Activated CD4-positive, alpha-beta memory T cell treated with anti-CD3 and anti-CD28 coated beads, Interleukin-2, amount 10 ng/mL, durations not matched to agents 7 days and 5 days (primary cell): ENCODE measurements at regions of chr17 and their contacts with region 1.

Region 1: DNA sequence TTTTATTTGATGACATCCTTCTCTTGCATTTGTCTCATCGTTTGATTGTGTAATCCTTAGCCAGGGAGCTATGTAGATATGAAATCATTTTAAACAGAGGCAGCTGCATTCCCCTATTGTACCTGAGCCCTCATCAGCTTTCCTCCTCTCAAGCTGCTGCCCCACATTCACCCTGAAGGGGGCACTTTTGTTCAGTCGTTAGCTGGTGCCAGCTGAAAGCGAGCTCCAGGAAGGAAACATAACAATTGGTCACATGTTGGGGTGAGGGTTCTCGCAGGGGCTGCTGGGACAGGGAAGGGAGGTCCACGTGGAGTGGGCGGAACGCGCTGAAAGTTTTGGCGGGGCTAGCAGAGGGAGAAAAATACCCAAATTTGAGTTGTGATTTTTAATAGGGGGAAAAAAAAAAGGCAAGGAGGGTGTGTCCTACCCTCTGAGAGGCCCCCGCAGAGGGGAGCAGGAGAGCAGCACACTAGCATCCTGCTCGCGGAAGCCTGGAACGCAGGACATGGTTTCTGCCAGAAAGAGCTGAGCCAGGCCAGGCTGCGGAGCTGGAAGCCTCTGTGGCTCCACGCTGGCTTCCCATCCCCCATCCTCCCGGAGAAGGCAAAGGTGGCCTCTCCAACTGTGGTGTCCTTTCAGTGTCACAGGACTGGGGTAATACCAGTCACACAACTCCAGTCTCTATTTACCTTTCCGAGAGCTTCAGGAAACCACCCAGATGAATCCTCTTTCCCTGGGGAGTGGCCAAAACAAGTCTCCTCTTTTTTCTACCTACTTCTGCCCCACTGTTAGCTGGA is 8.5 kb upstream of the MSL1 start:
- DNase-seq: peak; percentile 95
- H3K4me3 Mint-ChIP-seq: peak overlapping the region; percentile 76
- H3K27ac Mint-ChIP-seq: peak overlapping the region; percentile 68
- H3K4me1 Mint-ChIP-seq: peaks cover 57% of the 10 kb centered on the region
- H3K27me3 Mint-ChIP-seq: no peaks in the 10 kb centered on the region

Region 2: GRCh38 chr17:40018211-40019121 is 94.8 kb before region 1 on chr17:
- CTCF ChIA-PET with region 1: interaction called, 26 read pairs
- POLR2A ChIA-PET with region 1: interaction called, 4 read pairs
- DNase-seq: no peak
- H3K4me3 Mint-ChIP-seq: no peak overlapping the region
- H3K27ac Mint-ChIP-seq: no peak overlapping the region
- H3K4me1 Mint-ChIP-seq: peaks cover 4% of the 10 kb centered on the region
- H3K27me3 Mint-ChIP-seq: no peaks in the 10 kb centered on the region

Region 3: DNA sequence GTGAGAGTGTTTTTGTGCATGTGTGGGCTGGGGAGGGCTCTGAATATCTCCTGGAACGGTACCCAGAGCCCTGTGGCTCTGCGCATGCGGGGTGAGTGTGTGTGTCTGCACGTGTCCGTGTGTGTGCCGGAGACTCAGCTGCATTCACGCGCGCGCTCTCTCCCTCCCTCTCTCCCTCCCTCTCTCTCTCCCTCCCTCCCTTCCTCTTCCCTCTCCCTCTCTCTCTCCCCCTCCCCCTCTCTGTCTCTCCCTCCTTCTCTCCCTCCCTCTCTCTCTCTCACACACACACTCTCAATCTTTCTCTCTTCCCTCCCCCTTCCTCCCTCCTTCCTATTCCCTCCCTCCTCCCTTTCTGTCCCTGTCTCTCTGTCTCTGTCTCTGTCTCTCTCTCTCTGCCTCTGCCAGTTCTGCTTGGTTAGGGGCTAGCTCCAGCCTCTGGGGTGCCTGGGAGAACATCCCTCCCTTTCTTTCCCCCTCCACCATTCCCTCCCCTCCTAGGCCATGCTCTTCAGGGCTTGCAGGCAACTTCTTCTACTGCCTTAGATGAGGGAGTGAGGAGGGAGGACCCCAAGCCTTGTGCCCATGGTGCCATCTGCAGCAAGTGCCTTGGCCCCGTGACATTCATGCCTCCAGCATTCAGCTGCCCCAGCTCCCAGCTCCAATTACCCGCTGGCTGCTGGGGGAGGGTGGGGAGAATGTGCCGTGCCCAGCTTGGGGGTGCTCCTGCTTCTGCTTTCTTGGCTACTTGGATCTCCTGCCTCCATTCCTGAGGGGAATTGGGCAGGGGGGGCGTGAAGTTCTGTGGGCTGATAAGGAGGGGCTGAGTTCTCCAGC is 44.2 kb before region 1 on chr17:
- CTCF ChIA-PET with region 1: interaction called, 49 read pairs
- POLR2A ChIA-PET with region 1: interaction called, 11 read pairs
- DNase-seq: peak; percentile 76
- H3K4me3 Mint-ChIP-seq: peak overlapping the region; percentile 75
- H3K27ac Mint-ChIP-seq: peak overlapping the region; percentile 66
- H3K4me1 Mint-ChIP-seq: peaks cover 39% of the 10 kb centered on the region
- H3K27me3 Mint-ChIP-seq: peaks cover 11% of the 10 kb centered on the region

Region 4: DNA sequence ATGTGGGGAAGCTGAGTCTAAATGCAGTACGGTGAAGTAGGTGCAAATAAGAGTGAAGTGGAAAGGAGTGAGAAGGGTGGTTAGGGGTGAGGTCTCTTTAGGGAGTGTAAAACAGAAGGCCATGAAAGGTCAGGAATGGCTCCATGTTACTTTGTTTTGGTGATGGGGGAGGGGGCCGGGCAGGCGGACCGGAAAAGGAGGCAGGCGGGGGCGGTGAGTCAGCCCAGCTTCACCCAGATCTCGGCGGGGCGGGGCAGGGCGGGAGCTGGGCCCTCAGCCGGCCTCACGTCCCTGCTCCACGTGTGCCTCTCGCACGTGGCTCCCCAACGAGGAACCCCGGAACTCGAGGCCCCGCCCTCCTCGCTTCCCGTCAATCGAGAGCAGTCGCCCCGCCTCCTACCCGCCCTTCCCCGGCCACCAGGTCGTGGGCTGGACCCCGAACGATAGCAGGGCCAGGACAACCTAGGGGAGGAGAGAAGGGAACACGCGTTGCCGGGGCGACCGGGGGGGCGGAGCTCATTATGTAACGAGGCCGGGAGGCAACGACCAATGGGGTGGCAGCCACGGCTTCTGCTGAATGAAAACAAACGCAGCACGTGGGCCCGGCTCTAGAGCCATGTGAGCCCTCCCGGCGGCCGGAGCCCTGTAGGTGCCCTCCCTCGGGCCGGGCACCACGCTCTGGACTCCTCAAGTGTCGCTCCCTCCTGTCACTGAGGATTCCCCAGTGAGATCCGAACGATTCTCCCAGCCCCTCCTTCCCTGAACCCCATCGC is 14.3 kb before region 1 on chr17:
- CTCF ChIA-PET with region 1: interaction called, 141 read pairs
- POLR2A ChIA-PET with region 1: interaction called, 110 read pairs
- DNase-seq: peak; percentile 98
- H3K4me3 Mint-ChIP-seq: peak overlapping the region; percentile 77
- H3K27ac Mint-ChIP-seq: peak overlapping the region; percentile 92
- H3K4me1 Mint-ChIP-seq: peaks cover 88% of the 10 kb centered on the region
- H3K27me3 Mint-ChIP-seq: no peaks in the 10 kb centered on the region

Region 5: GRCh38 chr17:40168262-40168832 is 55.0 kb after region 1 on chr17:
- CTCF ChIA-PET with region 1: interaction called, 104 read pairs
- POLR2A ChIA-PET with region 1: interaction called, 21 read pairs
- DNase-seq: peak; percentile 32
- H3K4me3 Mint-ChIP-seq: no peak overlapping the region
- H3K27ac Mint-ChIP-seq: peak overlapping the region; percentile 58
- H3K4me1 Mint-ChIP-seq: peaks cover 5% of the 10 kb centered on the region
- H3K27me3 Mint-ChIP-seq: no peaks in the 10 kb centered on the region

Region 6: GRCh38 chr17:40219073-40219860 is 106.0 kb after region 1 on chr17 and contains the start of gene WIPF2:
- CTCF ChIA-PET with region 1: interaction called, 18 read pairs
- POLR2A ChIA-PET with region 1: interaction called, 5 read pairs
- DNase-seq: peak; percentile 97
- H3K4me3 Mint-ChIP-seq: peak within 1 kb of the TSS; percentile 90
- H3K27ac Mint-ChIP-seq: peak within 1 kb of the TSS; percentile 100
- H3K4me1 Mint-ChIP-seq: peaks cover 32% of the 10 kb centered on the region
- H3K27me3 Mint-ChIP-seq: no peaks in the 10 kb centered on the region
- total RNA-seq, gene WIPF2: 26.0 TPM

Region 7: GRCh38 chr17:40259505-40259904 is 146.2 kb after region 1 on chr17:
- CTCF ChIA-PET with region 1: no interaction called
- POLR2A ChIA-PET with region 1: no interaction called
- DNase-seq: no peak
- H3K4me3 Mint-ChIP-seq: no peak overlapping the region
- H3K27ac Mint-ChIP-seq: no peak overlapping the region
- H3K4me1 Mint-ChIP-seq: no peaks in the 10 kb centered on the region
- H3K27me3 Mint-ChIP-seq: no peaks in the 10 kb centered on the region

Region 8: GRCh38 chr17:40331743-40332641 is 218.7 kb after region 1 on chr17:
- CTCF ChIA-PET with region 1: no interaction called
- POLR2A ChIA-PET with region 1: no interaction called
- DNase-seq: no peak
- H3K4me3 Mint-ChIP-seq: peak overlapping the region; percentile 54
- H3K27ac Mint-ChIP-seq: peak overlapping the region; percentile 64
- H3K4me1 Mint-ChIP-seq: peaks cover 87% of the 10 kb centered on the region
- H3K27me3 Mint-ChIP-seq: no peaks in the 10 kb centered on the region

Region 9: GRCh38 chr17:40499551-40500174 is 386.4 kb after region 1 on chr17:
- CTCF ChIA-PET with region 1: no interaction called
- POLR2A ChIA-PET with region 1: no interaction called
- DNase-seq: no peak
- H3K4me3 Mint-ChIP-seq: no peak overlapping the region
- H3K27ac Mint-ChIP-seq: no peak overlapping the region
- H3K4me1 Mint-ChIP-seq: no peaks in the 10 kb centered on the region
- H3K27me3 Mint-ChIP-seq: peaks cover 16% of the 10 kb centered on the region

Region 10: DNA sequence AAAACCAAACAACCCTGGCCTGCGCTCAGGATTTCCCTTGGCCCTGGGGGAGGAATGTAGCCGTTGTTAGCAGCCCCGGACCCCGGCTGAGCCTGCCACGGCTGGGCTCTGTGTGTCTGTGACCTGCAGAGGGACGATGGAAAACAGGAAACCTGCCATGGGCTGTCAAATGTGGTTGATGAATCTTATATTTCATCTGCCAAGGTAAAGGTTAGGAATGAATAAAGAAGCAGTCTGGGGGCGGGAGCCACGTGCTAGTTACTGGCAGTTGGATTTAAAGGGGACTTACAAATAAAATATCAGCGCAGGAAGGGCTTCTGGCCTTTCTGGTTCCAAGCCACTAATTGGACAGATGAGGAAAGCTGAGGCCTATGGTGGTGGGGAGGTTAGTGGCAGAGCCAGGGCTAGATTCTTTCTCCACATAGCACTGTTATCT is 824.1 kb after region 1 on chr17 and contains the start of gene KRT23:
- CTCF ChIA-PET with region 1: no interaction called
- POLR2A ChIA-PET with region 1: no interaction called
- DNase-seq: no peak
- H3K4me3 Mint-ChIP-seq: no peak within 1 kb of the TSS
- H3K27ac Mint-ChIP-seq: no peak within 1 kb of the TSS
- H3K4me1 Mint-ChIP-seq: no peaks in the 10 kb centered on the region
- H3K27me3 Mint-ChIP-seq: peaks cover 14% of the 10 kb centered on the region
- total RNA-seq, gene KRT23: not detected